Activated CD8-positive, alpha-beta T cell treated with anti-CD3 and anti-CD28 coated beads for 36 hours (primary cell): ENCODE measurements at regions of chr16 and their contacts with region 1.

Region 1: GRCh38 chr16:50368410-50369132 is at the start of gene BRD7:
- DNase-seq: peak; percentile 65
- ATAC-seq: peak; percentile 91
- H3K4me3 Mint-ChIP-seq: peak within 1 kb of the TSS; percentile 93
- H3K27ac Mint-ChIP-seq: peak within 1 kb of the TSS; percentile 92
- H3K4me1 Mint-ChIP-seq: peaks cover 36% of the 10 kb centered on the region
- H3K27me3 Mint-ChIP-seq: no peaks in the 10 kb centered on the region
- CTCF ChIP-seq: no peak
- total RNA-seq, gene BRD7: 76.2 to 93.4 TPM

Region 2: DNA sequence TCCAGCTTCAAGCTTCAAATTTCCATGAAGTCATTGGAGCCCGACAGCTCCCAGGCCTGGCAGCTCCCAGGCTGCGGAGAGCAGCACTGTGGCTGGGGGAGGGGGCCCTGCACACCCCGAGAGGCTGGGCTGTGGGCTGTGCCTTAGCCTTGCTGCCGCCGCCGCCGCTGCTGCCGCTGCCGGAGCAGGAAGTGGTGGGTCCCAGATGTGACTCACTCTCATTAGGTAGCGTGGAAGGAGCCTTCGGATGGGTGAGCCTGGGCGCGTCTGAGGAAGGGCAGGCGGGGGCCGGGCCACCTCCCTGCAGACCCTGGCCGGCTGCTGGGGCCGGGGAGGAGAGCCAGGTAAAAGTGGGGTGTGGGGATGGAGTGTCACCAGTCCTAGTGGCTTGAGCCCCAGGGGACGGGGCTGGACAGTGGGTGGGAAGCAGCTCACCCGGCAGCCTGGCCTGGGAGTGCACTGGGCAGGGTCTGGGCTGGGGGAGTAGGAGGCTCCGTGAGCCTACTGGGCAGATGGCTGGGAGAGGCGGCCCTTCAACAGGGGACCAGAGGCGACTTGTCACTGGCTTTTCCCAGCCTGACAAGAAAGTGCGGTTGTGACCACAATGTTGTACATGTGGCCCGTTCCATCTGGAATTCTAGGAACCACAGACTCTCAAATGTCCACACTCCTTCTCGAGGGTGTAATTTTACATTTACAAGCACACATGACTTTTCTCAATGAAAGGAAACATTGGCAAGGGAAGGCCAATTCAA is 102.1 kb before region 1 on chr16 and contains the start of gene ADCY7:
- CTCF ChIA-PET with region 1: no interaction called
- POLR2A ChIA-PET with region 1: no interaction called
- intact Hi-C with region 1: no loop called
- DNase-seq: peak; percentile 91
- ATAC-seq: peak; percentile 79
- H3K4me3 Mint-ChIP-seq: peak within 1 kb of the TSS; percentile 84
- H3K27ac Mint-ChIP-seq: peak within 1 kb of the TSS; percentile 95
- H3K4me1 Mint-ChIP-seq: peaks cover 70% of the 10 kb centered on the region
- H3K27me3 Mint-ChIP-seq: no peaks in the 10 kb centered on the region
- CTCF ChIP-seq: no peak
- total RNA-seq, gene ADCY7: 89.9 to 92.1 TPM

Region 3: GRCh38 chr16:50741808-50742575 is 373.4 kb after region 1 on chr16 and contains the start of gene CYLD:
- CTCF ChIA-PET with region 1: interaction called, 3 read pairs
- POLR2A ChIA-PET with region 1: no interaction called
- intact Hi-C with region 1: loop called (anchors 10 kb)
- DNase-seq: peak; percentile 100
- ATAC-seq: peak; percentile 91
- H3K4me3 Mint-ChIP-seq: peak within 1 kb of the TSS; percentile 93
- H3K27ac Mint-ChIP-seq: peak within 1 kb of the TSS; percentile 97
- H3K4me1 Mint-ChIP-seq: peaks cover 38% of the 10 kb centered on the region
- H3K27me3 Mint-ChIP-seq: no peaks in the 10 kb centered on the region
- CTCF ChIP-seq: no peak
- total RNA-seq, gene CYLD: 86.4 to 94.4 TPM